Pancreas (tissue), 10 donors: ENCODE measurements at regions of chr16 and their contacts with region 1.

Region 1: DNA sequence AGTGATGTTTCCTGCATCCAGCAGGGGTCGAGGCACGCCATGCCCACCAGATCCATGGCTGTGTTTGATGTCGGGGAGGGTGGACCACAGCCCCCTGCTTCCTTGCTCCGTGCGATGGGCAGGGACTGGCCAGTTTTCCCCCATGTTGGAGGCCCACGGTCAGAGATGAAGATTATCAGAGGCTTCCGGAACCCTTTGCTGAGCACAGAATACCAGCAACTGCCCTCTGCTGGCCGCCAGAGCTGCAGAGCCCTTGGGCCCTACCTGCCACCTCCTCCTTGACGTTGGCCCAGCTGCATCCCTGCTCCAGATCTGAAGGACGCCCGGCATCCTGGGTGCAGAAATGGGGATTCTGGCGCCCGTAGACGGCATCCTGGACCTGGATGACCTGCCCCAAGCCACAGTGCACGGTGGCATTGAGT is 23.7 kb upstream of the BCO1 start:
- DNase-seq: peak in 1 of 6 donors; percentile 14
- ATAC-seq: peak in 2 of 4 donors; percentile 36 to 57
- H3K4me3 ChIP-seq: no peak overlapping the region
- H3K27ac ChIP-seq: no peak overlapping the region
- H3K4me1 ChIP-seq: no peaks in the 10 kb centered on the region
- H3K27me3 ChIP-seq: no peaks in the 10 kb centered on the region
- CTCF ChIP-seq: no peak

Region 2: GRCh38 chr16:81745704-81746558 is 531.2 kb after region 1 on chr16:
- intact Hi-C with region 1: loop called in 1 of 3 experiments (anchors 10 kb)
- DNase-seq: peak; percentile 53 to 84 (median 72)
- ATAC-seq: peak; percentile 88 to 98 (median 95)
- H3K4me3 ChIP-seq: peak overlapping the region in 3 of 4 donors; percentile 28 to 45 (median 28)
- H3K27ac ChIP-seq: no peak overlapping the region
- H3K4me1 ChIP-seq: no peaks in the 10 kb centered on the region
- H3K27me3 ChIP-seq: no peaks in the 10 kb centered on the region
- CTCF ChIP-seq: no peak